Stomach (tissue), 19 donors: ENCODE measurements at regions of chr4 and their contacts with region 1.

Region 1: GRCh38 chr4:42562016-42562415 is 94.9 kb downstream of the ATP8A1 start:
- DNase-seq: no peak
- H3K4me3 ChIP-seq: no peak overlapping the region
- H3K27ac ChIP-seq: no peak overlapping the region
- H3K4me1 ChIP-seq: no peaks in the 10 kb centered on the region
- H3K27me3 ChIP-seq: no peaks in the 10 kb centered on the region
- CTCF ChIP-seq: no peak
- EP300 ChIP-seq: no peak
- POLR2A ChIP-seq: no peak

Region 2: GRCh38 chr4:42339935-42340406 is 222.0 kb before region 1 on chr4:
- intact Hi-C with region 1: no loop called
- DNase-seq: peak in 1 of 2 donors; percentile 49
- H3K4me3 ChIP-seq: no peak overlapping the region
- H3K27ac ChIP-seq: peak overlapping the region in 3 of 5 donors; percentile 10 to 35 (median 14)
- H3K4me1 ChIP-seq: no peaks in the 10 kb centered on the region
- H3K27me3 ChIP-seq: no peaks in the 10 kb centered on the region
- CTCF ChIP-seq: no peak
- EP300 ChIP-seq: no peak
- POLR2A ChIP-seq: no peak

Region 3: DNA sequence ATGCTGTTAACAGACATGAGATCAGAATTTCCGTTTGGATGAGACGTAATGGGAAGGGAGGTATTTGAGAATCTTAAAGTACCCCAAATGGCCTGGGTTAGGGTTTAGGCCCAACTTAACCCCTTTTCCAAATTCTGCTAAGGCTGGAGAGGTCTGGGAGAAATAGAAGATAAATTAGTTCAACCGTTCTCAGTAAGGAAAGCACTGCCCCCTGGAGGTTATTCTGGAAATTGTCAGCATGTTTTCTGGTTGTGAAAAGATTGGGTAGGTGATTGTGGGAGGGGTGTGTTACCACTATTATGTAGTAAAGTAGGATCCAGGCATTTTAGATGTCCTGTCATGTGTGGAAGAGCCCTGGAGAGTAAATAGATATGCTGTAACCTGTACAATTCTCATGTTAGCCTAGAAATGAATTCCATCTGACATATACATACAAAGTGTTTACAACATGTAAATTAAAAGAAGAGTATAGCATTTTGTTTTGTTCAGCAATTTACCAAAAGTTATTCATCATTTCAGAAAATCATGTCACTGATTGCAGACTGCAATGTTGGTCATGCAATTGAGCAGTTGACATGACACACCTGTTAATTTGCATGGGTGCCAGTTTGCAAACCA is 303.7 kb after region 1 on chr4:
- intact Hi-C with region 1: loop called (anchors 5 kb)
- DNase-seq: peak; percentile 54 to 74
- H3K4me3 ChIP-seq: no peak overlapping the region
- H3K27ac ChIP-seq: no peak overlapping the region
- H3K4me1 ChIP-seq: no peaks in the 10 kb centered on the region
- H3K27me3 ChIP-seq: peaks cover 0 to 2% (median 0%) of the 10 kb centered on the region in 3 donors
- CTCF ChIP-seq: peak in 5 of 7 experiments; percentile 50 to 78 (median 68)
- EP300 ChIP-seq: no peak
- POLR2A ChIP-seq: no peak